WTC11 (cell line): ENCODE measurements at regions of chr16 and their contacts with region 1.

Region 1: GRCh38 chr16:69105489-69106361 is at the start of gene HAS3:
- DNase-seq: peak; percentile 74
- ATAC-seq: peak; percentile 25
- H3K4me3 Mint-ChIP-seq: peak within 1 kb of the TSS; percentile 96
- H3K27ac Mint-ChIP-seq: peak within 1 kb of the TSS; percentile 98
- H3K4me1 Mint-ChIP-seq: peaks cover 67% of the 10 kb centered on the region
- H3K27me3 Mint-ChIP-seq: peaks cover 6% of the 10 kb centered on the region; the same call in 1 of the 2 replicates
- CTCF ChIP-seq: no peak
- total RNA-seq, gene HAS3: 54.4 to 66.9 TPM (median 56.0 TPM) in 3 replicates

Region 2: DNA sequence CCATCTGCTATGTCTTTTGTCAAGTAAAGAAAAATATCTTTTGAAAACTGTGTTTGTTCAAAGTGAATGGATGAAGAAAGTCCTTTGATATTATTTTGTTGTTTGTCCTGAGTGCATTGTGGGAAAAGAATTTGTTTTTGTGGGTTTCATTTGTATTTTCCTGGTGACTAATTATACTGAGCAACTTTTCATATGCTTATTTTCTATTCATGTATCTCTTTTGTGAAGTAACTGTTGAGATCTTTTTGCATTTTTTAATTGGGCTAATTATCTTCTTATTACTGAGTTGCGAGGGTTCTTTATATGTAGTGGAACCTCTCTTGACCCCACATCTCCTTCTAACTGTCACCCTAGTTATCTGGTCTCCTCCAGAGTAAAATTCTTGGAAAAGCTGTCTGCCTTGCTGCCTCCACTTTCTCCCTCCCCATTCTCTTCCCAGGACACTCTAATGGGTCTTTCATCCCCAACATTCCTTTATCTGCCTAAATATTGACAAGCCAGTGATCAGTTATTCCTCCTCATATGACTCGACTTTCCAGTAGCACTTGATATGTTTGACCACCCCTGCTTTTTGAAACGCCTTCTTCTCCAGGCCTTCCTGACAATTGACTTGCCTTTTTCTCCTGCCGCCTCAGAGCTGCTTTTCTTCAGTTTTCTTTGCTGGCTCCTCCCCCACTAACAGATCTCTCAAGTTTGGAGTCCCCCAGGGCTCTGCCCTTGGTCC is 117.8 kb before region 1 on chr16:
- CTCF ChIA-PET with region 1: interaction called, 18 read pairs
- POLR2A ChIA-PET with region 1: interaction called, 3 read pairs
- DNase-seq: no peak
- ATAC-seq: peak; percentile 68; the same call in 1 of the 2 replicates
- H3K4me3 Mint-ChIP-seq: no peak overlapping the region; the same call in 1 of the 2 replicates
- H3K27ac Mint-ChIP-seq: peak overlapping the region; percentile 81
- H3K4me1 Mint-ChIP-seq: peaks cover 55% of the 10 kb centered on the region
- H3K27me3 Mint-ChIP-seq: no peaks in the 10 kb centered on the region; the same call in 1 of the 2 replicates
- CTCF ChIP-seq: no peak

Region 3: DNA sequence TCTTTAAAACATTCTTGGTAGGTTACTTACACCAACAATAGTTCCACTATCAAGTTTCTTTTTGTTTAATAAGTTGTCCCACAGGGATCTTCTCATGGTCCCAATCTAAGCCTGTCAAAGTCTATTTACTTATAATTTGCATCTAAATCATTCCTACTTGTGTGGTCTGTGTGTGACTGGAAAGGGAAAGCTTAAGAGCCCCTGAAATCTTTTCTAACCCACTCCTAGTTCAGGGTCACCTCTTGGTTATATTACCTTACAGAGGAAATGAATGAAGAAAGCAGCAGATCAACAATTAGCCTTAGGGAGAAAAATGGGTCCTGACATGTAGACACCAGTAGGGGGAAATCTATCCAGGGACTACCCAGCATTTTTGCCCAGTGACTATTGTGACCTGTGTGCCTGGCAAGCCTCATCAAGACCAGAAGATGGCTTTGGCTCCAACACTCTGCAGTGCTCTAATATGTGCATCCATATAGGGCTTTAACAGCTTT is 110.7 kb before region 1 on chr16:
- CTCF ChIA-PET with region 1: interaction called, 18 read pairs
- POLR2A ChIA-PET with region 1: interaction called, 3 read pairs
- DNase-seq: peak; percentile 24
- ATAC-seq: peak; percentile 93
- H3K4me3 Mint-ChIP-seq: peak overlapping the region; percentile 6; the same call in 1 of the 2 replicates
- H3K27ac Mint-ChIP-seq: peak overlapping the region; percentile 86
- H3K4me1 Mint-ChIP-seq: peaks cover 60% of the 10 kb centered on the region
- H3K27me3 Mint-ChIP-seq: no peaks in the 10 kb centered on the region; the same call in 1 of the 2 replicates
- CTCF ChIP-seq: peak; percentile 32; the same call in 1 of the 2 replicates